Ovary (tissue), 10 donors: ENCODE measurements at regions of chr20 and their contacts with region 1.

Region 1: GRCh38 chr20:35092524-35093266 is at the start of gene TRPC4AP:
- DNase-seq: peak; percentile 84 to 94 (median 90)
- H3K4me3 ChIP-seq: peak within 1 kb of the TSS; percentile 99
- H3K27ac ChIP-seq: peak within 1 kb of the TSS; percentile 77 to 87
- H3K4me1 ChIP-seq: peaks cover 8% of the 10 kb centered on the region
- H3K27me3 ChIP-seq: no peaks in the 10 kb centered on the region
- CTCF ChIP-seq: peak; percentile 97 to 99 (median 98)
- EP300 ChIP-seq: no peak
- POLR2A ChIP-seq: peak; percentile 62
- total RNA-seq, gene TRPC4AP: 32.9 to 41.5 (median 40.7) TPM

Region 2: DNA sequence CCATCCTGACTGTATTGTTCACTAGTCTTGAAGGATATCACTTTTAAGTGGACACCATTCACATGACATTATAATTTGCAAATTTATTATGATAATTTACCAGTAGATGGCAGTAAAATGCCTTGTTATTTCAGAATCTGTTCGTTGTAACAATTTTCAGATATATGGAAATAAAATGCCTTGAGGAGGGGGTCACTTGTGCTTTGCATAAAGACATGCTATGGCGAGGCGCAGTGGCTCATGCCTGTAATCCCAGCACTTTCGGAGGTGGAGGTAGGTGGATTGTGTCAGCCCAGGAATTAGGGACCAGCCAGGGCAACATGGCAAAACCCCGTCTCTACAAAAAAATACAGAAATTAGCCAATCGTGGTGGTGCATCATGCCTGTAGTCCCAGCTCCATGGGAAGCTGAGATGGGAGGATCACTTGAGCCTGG is 258.2 kb before region 1 on chr20:
- intact Hi-C with region 1: loop called in 1 of 4 experiments (anchors 10 kb)
- DNase-seq: no peak
- H3K4me3 ChIP-seq: no peak overlapping the region
- H3K27ac ChIP-seq: no peak overlapping the region
- H3K4me1 ChIP-seq: no peaks in the 10 kb centered on the region
- H3K27me3 ChIP-seq: no peaks in the 10 kb centered on the region
- CTCF ChIP-seq: peak in 2 of 3 donors; percentile 34 to 41
- EP300 ChIP-seq: no peak
- POLR2A ChIP-seq: no peak

Region 3: DNA sequence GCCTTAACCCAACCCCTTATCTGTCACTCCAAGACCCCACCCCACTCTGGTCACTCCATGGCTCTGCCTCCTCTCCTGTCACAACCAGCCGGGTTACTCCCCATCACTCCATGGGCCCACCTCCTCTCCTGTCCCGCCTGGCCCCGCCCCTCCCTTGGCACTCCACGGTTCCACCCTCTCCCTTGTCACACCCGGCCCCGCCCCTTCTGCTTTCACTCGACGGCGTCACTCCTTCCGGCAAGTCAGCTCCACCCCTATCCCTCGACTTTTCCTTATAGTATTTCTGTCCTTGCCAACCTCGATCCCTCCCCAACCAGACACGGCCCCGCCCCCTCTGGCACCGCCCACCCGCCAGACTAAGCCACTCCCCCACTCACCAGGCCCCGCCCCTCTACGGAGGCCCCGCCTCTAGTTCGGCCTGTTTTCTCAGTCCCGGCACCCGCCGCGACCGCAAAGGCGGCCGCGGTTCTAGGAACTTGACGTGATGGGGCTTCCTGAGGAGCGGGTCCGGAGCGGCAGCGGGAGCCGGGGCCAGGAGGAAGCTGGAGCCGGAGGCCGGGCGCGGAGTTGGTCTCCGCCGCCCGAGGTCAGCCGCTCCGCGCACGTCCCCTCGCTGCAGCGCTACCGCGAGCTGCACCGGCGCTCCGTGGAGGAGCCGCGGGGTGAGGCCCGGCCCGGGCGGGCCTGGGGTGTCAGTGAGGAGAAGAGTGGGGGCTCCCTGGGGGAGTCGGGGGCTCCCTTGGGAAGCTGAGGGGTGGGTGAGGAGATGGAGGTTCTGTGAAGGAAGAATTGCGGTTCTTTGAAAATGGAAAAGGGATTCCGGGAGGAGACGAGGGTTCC is 216.3 kb before region 1 on chr20 and contains the start of gene ACSS2:
- intact Hi-C with region 1: loop called in 3 of 4 experiments (anchors 2 to 5 kb)
- DNase-seq: peak; percentile 98 to 99 (median 99)
- H3K4me3 ChIP-seq: peak within 1 kb of the TSS; percentile 84
- H3K27ac ChIP-seq: peak within 1 kb of the TSS; percentile 26 to 67
- H3K4me1 ChIP-seq: peaks cover 9% of the 10 kb centered on the region
- H3K27me3 ChIP-seq: no peaks in the 10 kb centered on the region
- CTCF ChIP-seq: no peak
- EP300 ChIP-seq: no peak
- POLR2A ChIP-seq: no peak
- total RNA-seq, gene ACSS2: 26.8 to 42.6 (median 39.1) TPM

Region 4: GRCh38 chr20:35207950-35208611 is 115.4 kb after region 1 on chr20:
- intact Hi-C with region 1: loop called in 2 of 4 experiments (anchors 2 to 10 kb)
- DNase-seq: peak; percentile 77 to 90 (median 79)
- H3K4me3 ChIP-seq: no peak overlapping the region
- H3K27ac ChIP-seq: peak overlapping the region in 1 of 2 donors; percentile 4
- H3K4me1 ChIP-seq: no peaks in the 10 kb centered on the region
- H3K27me3 ChIP-seq: no peaks in the 10 kb centered on the region
- CTCF ChIP-seq: peak; percentile 78 to 92 (median 86)
- EP300 ChIP-seq: no peak
- POLR2A ChIP-seq: no peak